ENCODE measurements at regions of chr1 and their contacts with region 1.

Region 1: GRCh38 chr1:235971571-235972310 is 93.1 kb downstream of the NID1 start:
- DNase-seq: peak; percentile 58
- H3K4me3 ChIP-seq: peak overlapping the region; percentile 14 to 61 (median 38)
- H3K27ac ChIP-seq: peak overlapping the region; percentile 78 to 94 (median 92)
- H3K4me1 ChIP-seq: peaks cover 8 to 19% (median 13%) of the 10 kb centered on the region in 3 donors
- H3K27me3 ChIP-seq: no peaks in the 10 kb centered on the region
- CTCF ChIP-seq: peak; percentile 75 to 93 (median 89)
- POLR2A ChIP-seq: peak in 2 of 4 donors; percentile 54 to 57

Region 2: GRCh38 chr1:235866913-235867845 is 104.6 kb before region 1 on chr1:
- intact Hi-C with region 1: loop called (anchors 5 kb)
- DNase-seq: peak; percentile 74
- H3K4me3 ChIP-seq: peak overlapping the region; percentile 75 to 99 (median 82)
- H3K27ac ChIP-seq: peak overlapping the region; percentile 93 to 98 (median 94)
- H3K4me1 ChIP-seq: peaks cover 3 to 47% (median 18%) of the 10 kb centered on the region in 3 donors
- H3K27me3 ChIP-seq: no peaks in the 10 kb centered on the region
- CTCF ChIP-seq: no peak
- POLR2A ChIP-seq: peak in 2 of 4 donors; percentile 60 to 91

Region 3: DNA sequence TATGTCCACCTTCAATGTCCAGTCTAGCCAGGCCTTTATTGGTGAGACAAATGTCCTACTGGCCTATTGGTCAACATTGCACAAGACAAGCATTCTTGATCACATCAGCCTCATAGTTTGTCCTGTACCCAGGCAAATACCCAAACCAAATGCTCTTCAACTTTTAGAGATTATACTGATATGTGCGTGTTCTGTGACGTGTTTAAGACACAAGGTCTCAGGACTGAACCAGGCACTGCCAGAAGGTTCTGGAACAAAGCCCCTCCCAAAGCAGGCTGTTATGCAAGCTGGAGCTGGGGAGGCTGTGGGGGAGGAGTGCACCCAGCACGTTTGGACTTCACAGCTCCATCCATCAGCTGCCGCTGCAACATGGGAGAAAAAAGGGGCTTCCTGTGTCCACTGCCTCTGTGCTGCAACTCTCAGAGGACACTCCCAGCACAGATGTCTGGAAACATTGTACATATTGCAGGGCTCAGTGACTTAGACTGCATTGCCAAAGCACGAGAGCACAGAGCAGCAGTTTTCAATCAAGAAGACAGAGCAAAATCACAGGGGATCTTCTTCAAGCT is 47.2 kb after region 1 on chr1:
- intact Hi-C with region 1: no loop called
- DNase-seq: no peak
- H3K4me3 ChIP-seq: no peak overlapping the region
- H3K27ac ChIP-seq: peak overlapping the region in 3 of 4 donors; percentile 87 to 96 (median 87)
- H3K4me1 ChIP-seq: peaks cover 0 to 63% (median 29%) of the 10 kb centered on the region in 3 donors
- H3K27me3 ChIP-seq: no peaks in the 10 kb centered on the region
- CTCF ChIP-seq: no peak
- POLR2A ChIP-seq: no peak